IMR-90 (cell line): ENCODE measurements at regions of chr5 and their contacts with region 1.

Region 1: DNA sequence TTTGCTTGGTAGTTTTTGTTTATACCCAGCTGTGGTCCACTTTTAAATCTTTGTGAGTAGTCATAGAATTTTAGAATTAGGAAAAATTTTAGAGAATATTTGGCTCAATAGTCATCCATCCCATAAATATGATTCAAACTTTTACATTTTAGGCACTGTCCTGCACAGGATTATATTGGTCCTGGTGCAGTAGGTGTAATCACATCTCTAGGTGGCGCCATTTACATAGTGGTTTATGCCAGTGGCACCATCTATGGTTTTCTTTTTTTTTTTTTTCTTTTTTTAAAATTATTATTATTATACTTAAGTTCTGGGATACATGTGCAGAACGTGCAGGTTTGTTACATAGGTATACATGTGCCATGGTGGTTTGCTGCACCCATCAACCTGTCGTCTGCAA is 260.7 kb upstream of the KCNN2 start:
- DNase-seq: peak; percentile 80
- ATAC-seq: peak; percentile 91
- H3K4me3 ChIP-seq: no peak overlapping the region
- H3K27ac ChIP-seq: no peak overlapping the region
- H3K4me1 ChIP-seq: no peaks in the 10 kb centered on the region
- H3K27me3 ChIP-seq: no peaks in the 10 kb centered on the region
- CTCF ChIP-seq: peak; percentile 82
- POLR2A ChIP-seq: no peak
- RAD21 ChIP-seq: peak; percentile 85

Region 2: DNA sequence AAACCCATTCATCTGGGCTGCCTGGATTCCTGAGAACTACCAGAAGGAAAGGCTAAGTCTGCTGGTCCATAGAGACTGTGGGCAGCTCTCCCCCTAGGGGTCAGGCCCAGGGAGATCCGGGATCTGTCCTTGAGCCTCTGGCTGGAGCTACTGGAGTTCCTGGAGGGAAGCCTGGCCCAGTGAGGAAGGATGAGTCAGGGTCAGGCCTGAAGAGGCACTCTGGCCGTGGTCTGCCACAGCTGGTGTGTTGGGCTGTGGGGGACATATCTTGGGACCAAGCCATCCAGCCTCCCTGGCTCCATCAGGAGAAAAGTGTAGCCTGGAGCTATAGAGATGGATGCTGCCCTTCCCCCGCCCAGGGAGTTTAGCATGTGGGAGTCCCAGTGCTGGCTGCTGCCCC is 370.4 kb before region 1 on chr5:
- CTCF ChIA-PET with region 1: no interaction called
- POLR2A ChIA-PET with region 1: no interaction called
- dilution Hi-C with region 1: no loop called
- in situ Hi-C with region 1: no loop called
- intact Hi-C with region 1: no loop called
- DNase-seq: no peak
- ATAC-seq: no peak
- H3K4me3 ChIP-seq: no peak overlapping the region
- H3K27ac ChIP-seq: no peak overlapping the region
- H3K4me1 ChIP-seq: no peaks in the 10 kb centered on the region
- H3K27me3 ChIP-seq: no peaks in the 10 kb centered on the region
- CTCF ChIP-seq: no peak
- POLR2A ChIP-seq: no peak
- RAD21 ChIP-seq: no peak

Region 3: DNA sequence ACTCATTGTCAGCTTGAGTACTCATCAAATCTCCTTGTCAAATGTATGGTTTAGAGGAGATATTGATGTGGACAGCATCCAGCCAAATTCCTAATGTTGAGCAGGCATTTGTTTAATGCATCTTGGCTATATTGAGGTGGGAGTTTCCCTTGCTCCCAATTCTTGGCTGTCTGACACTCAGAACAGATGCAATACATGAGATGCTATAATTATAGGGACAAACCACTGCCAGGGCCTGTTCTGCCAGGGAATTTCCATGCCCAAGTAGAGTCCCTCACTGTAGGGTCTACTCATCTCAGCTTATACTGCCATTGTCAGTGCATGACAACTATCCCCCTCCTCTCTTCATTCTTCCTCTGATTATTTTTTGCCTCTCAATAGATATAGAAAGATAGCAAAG is 131.3 kb before region 1 on chr5:
- CTCF ChIA-PET with region 1: no interaction called
- POLR2A ChIA-PET with region 1: no interaction called
- dilution Hi-C with region 1: no loop called
- in situ Hi-C with region 1: no loop called
- intact Hi-C with region 1: no loop called
- DNase-seq: no peak
- ATAC-seq: no peak
- H3K4me3 ChIP-seq: no peak overlapping the region
- H3K27ac ChIP-seq: no peak overlapping the region
- H3K4me1 ChIP-seq: no peaks in the 10 kb centered on the region
- H3K27me3 ChIP-seq: no peaks in the 10 kb centered on the region
- CTCF ChIP-seq: no peak
- POLR2A ChIP-seq: no peak
- RAD21 ChIP-seq: no peak

Region 4: GRCh38 chr5:114184006-114184405 is 82.9 kb after region 1 on chr5:
- CTCF ChIA-PET with region 1: no interaction called
- POLR2A ChIA-PET with region 1: no interaction called
- dilution Hi-C with region 1: no loop called
- in situ Hi-C with region 1: no loop called
- intact Hi-C with region 1: loop called (anchors 5 kb)
- DNase-seq: peak; percentile 25
- ATAC-seq: peak; percentile 57
- H3K4me3 ChIP-seq: no peak overlapping the region
- H3K27ac ChIP-seq: no peak overlapping the region
- H3K4me1 ChIP-seq: peaks cover 3% of the 10 kb centered on the region
- H3K27me3 ChIP-seq: no peaks in the 10 kb centered on the region
- CTCF ChIP-seq: no peak
- POLR2A ChIP-seq: no peak
- RAD21 ChIP-seq: no peak